ENCODE measurements at regions of chr3 and their contacts with region 1.

Region 1: DNA sequence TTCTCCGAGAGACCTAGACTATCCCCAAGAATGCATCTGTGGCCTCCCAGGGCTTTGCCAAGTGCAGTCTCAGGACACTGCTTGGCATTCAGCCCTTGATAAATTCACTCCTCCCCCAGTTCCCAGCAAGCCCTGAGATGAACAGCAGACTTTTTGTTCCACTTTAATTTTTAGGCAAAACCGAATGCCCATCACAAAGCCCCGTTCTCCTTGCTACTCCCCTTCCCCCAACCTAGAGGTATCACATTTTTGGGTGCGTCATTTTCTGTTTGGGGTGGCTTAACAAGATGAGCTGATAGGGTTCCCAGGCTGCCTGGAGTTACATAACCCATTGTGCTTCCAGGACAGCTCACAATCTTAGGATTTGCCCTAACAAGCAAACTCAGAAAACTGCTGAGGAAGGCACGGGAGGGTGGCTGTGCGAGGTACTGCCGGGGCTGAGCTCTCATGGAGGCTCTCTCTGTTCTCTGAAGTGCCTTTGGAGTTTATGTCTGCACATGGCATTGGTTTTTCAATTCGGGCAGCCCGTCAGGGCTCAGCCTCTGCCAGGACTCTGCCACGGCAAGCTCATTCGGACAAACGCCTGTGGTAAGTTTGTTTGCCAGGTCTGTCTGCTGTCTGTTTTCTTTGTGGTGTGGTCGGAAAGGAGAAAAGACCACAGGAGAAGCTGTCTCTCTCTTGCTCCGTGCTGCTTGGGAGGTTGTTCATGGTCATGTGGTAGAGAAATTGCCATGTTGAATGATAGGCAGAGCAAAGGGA is at the start of gene TRAK1:
- DNase-seq: no peak
- ATAC-seq: peak in 2 of 3 donors; percentile 51 to 56
- H3K4me3 ChIP-seq: no peak within 1 kb of the TSS
- H3K4me3 Mint-ChIP-seq: peak within 1 kb of the TSS; percentile 75
- H3K27ac ChIP-seq: no peak within 1 kb of the TSS
- H3K27ac Mint-ChIP-seq: peak within 1 kb of the TSS; percentile 76 to 78
- H3K4me1 ChIP-seq: peaks cover 16% of the 10 kb centered on the region
- H3K4me1 Mint-ChIP-seq: peaks cover 30 to 44% of the 10 kb centered on the region in 2 donors
- H3K27me3 ChIP-seq: no peaks in the 10 kb centered on the region
- H3K27me3 Mint-ChIP-seq: no peaks in the 10 kb centered on the region
- CTCF ChIP-seq: no peak
- total RNA-seq, gene TRAK1: 30.7 to 31.8 (median 31.8) TPM

Region 2: GRCh38 chr3:42012935-42013690 is 78.0 kb before region 1 on chr3:
- intact Hi-C with region 1: loop called (anchors 5 kb)
- DNase-seq: peak; percentile 69 to 87
- ATAC-seq: peak; percentile 72 to 88 (median 79)
- H3K4me3 ChIP-seq: peak overlapping the region; percentile 64
- H3K4me3 Mint-ChIP-seq: peak overlapping the region; percentile 92
- H3K27ac ChIP-seq: peak overlapping the region; percentile 98
- H3K27ac Mint-ChIP-seq: peak overlapping the region; percentile 76 to 83
- H3K4me1 ChIP-seq: peaks cover 24% of the 10 kb centered on the region
- H3K4me1 Mint-ChIP-seq: peaks cover 25 to 39% of the 10 kb centered on the region in 2 donors
- H3K27me3 ChIP-seq: no peaks in the 10 kb centered on the region
- H3K27me3 Mint-ChIP-seq: no peaks in the 10 kb centered on the region
- CTCF ChIP-seq: no peak

Region 3: GRCh38 chr3:42476225-42477125 is 385.3 kb after region 1 on chr3:
- intact Hi-C with region 1: no loop called
- DNase-seq: no peak
- ATAC-seq: no peak
- H3K4me3 ChIP-seq: no peak overlapping the region
- H3K4me3 Mint-ChIP-seq: no peak overlapping the region
- H3K27ac ChIP-seq: no peak overlapping the region
- H3K27ac Mint-ChIP-seq: no peak overlapping the region
- H3K4me1 ChIP-seq: no peaks in the 10 kb centered on the region
- H3K4me1 Mint-ChIP-seq: peaks cover 0 to 4% of the 10 kb centered on the region in 2 donors
- H3K27me3 ChIP-seq: no peaks in the 10 kb centered on the region
- H3K27me3 Mint-ChIP-seq: peaks cover 13 to 22% of the 10 kb centered on the region in 2 donors
- CTCF ChIP-seq: no peak